Activated CD4-positive, alpha-beta T cell treated with anti-CD3 and anti-CD28 coated beads for 36 hours (primary cell): ENCODE measurements at regions of chr21 and their contacts with region 1.

Region 1: GRCh38 chr21:46323227-46324128 is at the start of gene C21orf58:
- DNase-seq: peak; percentile 98
- ATAC-seq: peak; percentile 88
- H3K4me3 Mint-ChIP-seq: peak within 1 kb of the TSS; percentile 95
- H3K27ac Mint-ChIP-seq: peak within 1 kb of the TSS; percentile 94
- H3K4me1 Mint-ChIP-seq: peaks cover 30% of the 10 kb centered on the region
- H3K27me3 Mint-ChIP-seq: no peaks in the 10 kb centered on the region
- total RNA-seq, gene C21orf58: 27.4 to 33.0 TPM

Region 2: DNA sequence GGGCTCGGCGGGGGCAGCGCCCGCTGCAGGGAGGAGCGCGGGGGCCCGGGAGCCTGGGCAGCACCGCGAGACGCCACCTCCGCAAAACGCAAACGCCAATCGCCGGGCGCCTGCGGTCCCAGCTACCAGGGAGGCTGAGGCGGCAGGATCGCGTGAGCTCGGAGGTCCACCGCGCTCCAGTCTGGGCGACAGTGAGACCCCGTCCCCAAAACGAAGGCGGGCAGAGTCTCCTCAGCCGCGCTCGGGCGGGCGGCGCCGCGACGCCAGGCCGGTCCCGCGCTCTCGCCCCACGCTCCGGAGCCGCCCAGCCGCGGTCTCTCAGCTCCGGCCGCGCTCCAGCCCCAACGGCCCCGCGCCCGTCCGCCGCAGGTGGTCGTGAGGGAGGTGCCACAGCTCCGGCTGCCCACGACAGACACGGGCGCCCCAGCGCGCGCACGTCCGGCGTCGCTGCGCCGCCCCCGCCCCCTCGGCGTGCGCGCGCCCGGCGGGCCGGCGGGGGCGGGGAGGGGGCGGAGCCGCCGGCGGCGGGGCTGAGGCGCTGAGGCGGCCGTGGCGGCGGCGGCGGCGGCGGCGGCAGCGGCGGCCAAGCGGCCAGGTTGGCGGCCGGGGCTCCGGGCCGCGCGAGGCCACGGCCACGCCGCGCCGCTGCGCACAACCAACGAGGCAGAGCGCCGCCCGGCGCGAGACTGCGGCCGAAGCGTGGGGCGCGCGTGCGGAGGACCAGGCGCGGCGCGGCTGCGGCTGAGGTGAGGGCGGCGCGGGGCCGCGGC is 1249.2 kb before region 1 on chr21 and contains the start of gene ADARB1:
- CTCF ChIA-PET with region 1: no interaction called
- POLR2A ChIA-PET with region 1: no interaction called
- intact Hi-C with region 1: loop called in 1 of 2 experiments (anchors 5 kb)
- DNase-seq: peak; percentile 75
- ATAC-seq: peak; percentile 13
- H3K4me3 Mint-ChIP-seq: peak within 1 kb of the TSS; percentile 88
- H3K27ac Mint-ChIP-seq: peak within 1 kb of the TSS; percentile 91
- H3K4me1 Mint-ChIP-seq: peaks cover 42% of the 10 kb centered on the region
- H3K27me3 Mint-ChIP-seq: no peaks in the 10 kb centered on the region
- total RNA-seq, gene ADARB1: 32.8 to 37.7 TPM

Region 3: DNA sequence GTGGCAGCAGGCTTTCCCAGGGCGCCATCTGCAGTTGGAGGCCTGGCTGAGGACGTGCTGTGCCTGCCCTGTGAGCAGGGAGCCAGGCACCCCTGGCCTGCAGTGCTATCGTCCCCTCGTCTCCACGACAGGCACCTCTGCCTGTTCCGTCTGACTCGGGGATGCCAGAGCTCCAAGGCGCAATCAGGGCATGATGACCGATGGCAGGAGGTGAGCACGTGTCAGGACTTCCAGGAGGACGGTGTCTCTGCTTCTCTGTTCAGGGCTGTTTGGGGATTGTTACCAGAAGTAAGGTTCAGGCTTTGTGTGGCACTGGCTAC is 554.8 kb before region 1 on chr21:
- CTCF ChIA-PET with region 1: no interaction called
- POLR2A ChIA-PET with region 1: no interaction called
- intact Hi-C with region 1: loop called in 1 of 2 experiments (anchors 5 kb)
- DNase-seq: peak; percentile 64
- ATAC-seq: peak; percentile 3
- H3K4me3 Mint-ChIP-seq: peak overlapping the region; percentile 62
- H3K27ac Mint-ChIP-seq: peak overlapping the region; percentile 98
- H3K4me1 Mint-ChIP-seq: peaks cover 57% of the 10 kb centered on the region
- H3K27me3 Mint-ChIP-seq: no peaks in the 10 kb centered on the region

Region 4: GRCh38 chr21:45981151-45982089 is 342.1 kb before region 1 on chr21 and contains the start of gene COL6A1:
- CTCF ChIA-PET with region 1: no interaction called
- POLR2A ChIA-PET with region 1: no interaction called
- intact Hi-C with region 1: loop called in 1 of 2 experiments (anchors 1 kb)
- DNase-seq: peak; percentile 77
- ATAC-seq: peak; percentile 56
- H3K4me3 Mint-ChIP-seq: peak within 1 kb of the TSS; percentile 10
- H3K27ac Mint-ChIP-seq: no peak within 1 kb of the TSS
- H3K4me1 Mint-ChIP-seq: peaks cover 8% of the 10 kb centered on the region
- H3K27me3 Mint-ChIP-seq: peaks cover 4% of the 10 kb centered on the region
- total RNA-seq, gene COL6A1: 0.57 to 0.69 TPM

Region 5: GRCh38 chr21:46184625-46185555 is 138.6 kb before region 1 on chr21:
- CTCF ChIA-PET with region 1: no interaction called
- POLR2A ChIA-PET with region 1: no interaction called
- intact Hi-C with region 1: loop called in 1 of 2 experiments (anchors 1 kb)
- DNase-seq: peak; percentile 75
- ATAC-seq: peak; percentile 82
- H3K4me3 Mint-ChIP-seq: peak overlapping the region; percentile 77
- H3K27ac Mint-ChIP-seq: peak overlapping the region; percentile 63
- H3K4me1 Mint-ChIP-seq: peaks cover 4% of the 10 kb centered on the region
- H3K27me3 Mint-ChIP-seq: no peaks in the 10 kb centered on the region

Region 6: GRCh38 chr21:46253610-46254124 is 69.8 kb before region 1 on chr21:
- CTCF ChIA-PET with region 1: interaction called, 4 read pairs
- POLR2A ChIA-PET with region 1: interaction called, 4 read pairs
- intact Hi-C with region 1: loop called in 1 of 2 experiments (anchors 1 kb)
- DNase-seq: peak; percentile 72
- ATAC-seq: peak; percentile 95
- H3K4me3 Mint-ChIP-seq: no peak overlapping the region
- H3K27ac Mint-ChIP-seq: peak overlapping the region; percentile 89
- H3K4me1 Mint-ChIP-seq: peaks cover 39% of the 10 kb centered on the region
- H3K27me3 Mint-ChIP-seq: no peaks in the 10 kb centered on the region

Region 7: DNA sequence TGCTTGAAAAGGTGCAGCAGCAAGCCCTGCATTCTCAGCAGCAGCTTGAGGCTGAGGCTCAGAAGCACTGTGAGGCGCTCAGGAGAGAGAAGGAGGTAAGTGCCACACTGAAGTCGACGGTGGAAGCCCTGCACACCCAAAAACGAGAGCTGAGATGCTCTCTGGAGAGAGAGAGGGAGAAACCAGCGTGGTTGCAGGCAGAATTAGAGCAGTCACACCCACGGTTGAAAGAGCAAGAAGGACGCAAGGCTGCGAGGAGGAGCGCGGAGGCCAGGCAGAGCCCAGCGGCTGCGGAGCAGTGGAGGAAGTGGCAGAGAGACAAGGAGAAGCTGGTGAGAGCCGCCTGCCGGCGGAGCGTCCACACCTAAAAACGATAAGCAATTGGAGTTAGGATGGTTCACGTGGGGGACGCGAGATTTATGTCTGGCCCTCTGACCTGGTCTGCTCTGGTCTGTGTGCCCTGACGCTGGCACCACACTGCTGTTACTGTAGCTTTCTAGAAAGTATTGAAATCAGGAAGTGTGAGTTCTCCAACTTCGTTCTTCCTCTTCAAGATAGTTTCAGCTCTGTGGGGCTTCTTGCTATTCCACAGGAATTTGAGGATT is 108.5 kb after region 1 on chr21:
- CTCF ChIA-PET with region 1: no interaction called
- POLR2A ChIA-PET with region 1: no interaction called
- intact Hi-C with region 1: no loop called
- DNase-seq: no peak
- ATAC-seq: no peak
- H3K4me3 Mint-ChIP-seq: no peak overlapping the region
- H3K27ac Mint-ChIP-seq: no peak overlapping the region
- H3K4me1 Mint-ChIP-seq: no peaks in the 10 kb centered on the region
- H3K27me3 Mint-ChIP-seq: no peaks in the 10 kb centered on the region

Region 8: GRCh38 chr21:46458315-46459023 is 135.0 kb after region 1 on chr21 and contains the start of gene DIP2A:
- CTCF ChIA-PET with region 1: no interaction called
- POLR2A ChIA-PET with region 1: interaction called, 3 read pairs
- intact Hi-C with region 1: loop called (anchors 1 to 10 kb)
- DNase-seq: peak; percentile 96
- ATAC-seq: peak; percentile 98
- H3K4me3 Mint-ChIP-seq: peak within 1 kb of the TSS; percentile 91
- H3K27ac Mint-ChIP-seq: peak within 1 kb of the TSS; percentile 84
- H3K4me1 Mint-ChIP-seq: peaks cover 41% of the 10 kb centered on the region
- H3K27me3 Mint-ChIP-seq: no peaks in the 10 kb centered on the region
- total RNA-seq, gene DIP2A: 25.2 to 27.7 TPM

Region 9: GRCh38 chr21:46532080-46532479 is 208.6 kb after region 1 on chr21:
- CTCF ChIA-PET with region 1: no interaction called
- POLR2A ChIA-PET with region 1: no interaction called
- intact Hi-C with region 1: no loop called
- DNase-seq: no peak
- ATAC-seq: peak; percentile 36
- H3K4me3 Mint-ChIP-seq: no peak overlapping the region
- H3K27ac Mint-ChIP-seq: peak overlapping the region; percentile 64
- H3K4me1 Mint-ChIP-seq: peaks cover 34% of the 10 kb centered on the region
- H3K27me3 Mint-ChIP-seq: no peaks in the 10 kb centered on the region